ENCODE measurements at regions of chr10 and their contacts with region 1.

Region 1: DNA sequence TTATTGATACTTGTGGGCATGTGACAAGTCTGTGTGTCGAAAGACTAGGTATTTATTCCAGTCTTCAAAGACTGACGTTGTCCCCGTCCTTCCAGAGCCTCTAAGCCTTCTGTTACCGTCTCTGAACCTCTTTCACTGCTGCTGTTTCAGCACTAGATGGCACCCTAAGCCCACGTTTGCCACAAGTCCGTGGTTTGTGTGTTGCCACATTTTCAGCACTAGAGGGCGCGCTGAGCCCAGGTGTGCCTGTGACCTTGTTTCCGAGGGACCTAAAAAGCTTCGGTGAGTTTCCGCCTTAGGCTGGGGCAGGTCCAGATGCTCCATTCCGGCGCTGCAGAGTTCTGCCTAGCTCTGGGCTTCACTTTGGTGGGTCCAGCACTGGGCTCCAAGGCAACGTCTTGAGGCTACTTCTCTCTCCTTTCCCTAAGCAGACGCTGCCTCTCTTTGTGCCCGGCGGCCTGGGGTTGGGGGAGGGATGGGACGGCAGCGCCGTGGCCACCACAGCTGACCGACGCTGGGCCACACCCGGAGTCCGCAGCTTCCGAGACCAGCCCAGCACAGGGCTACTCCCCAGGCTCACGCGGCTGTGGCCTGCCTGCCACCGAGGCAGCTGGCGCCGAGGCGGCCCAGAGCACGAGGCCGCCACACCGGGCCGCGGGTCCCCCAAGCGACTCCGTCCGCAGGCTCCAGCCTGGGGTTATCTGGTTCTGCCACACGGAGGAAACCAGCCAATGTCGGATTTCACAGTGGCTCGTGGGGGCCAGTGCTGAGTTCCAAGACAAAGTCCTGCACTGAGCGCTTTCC is 520.2 kb downstream of the REEP3 start:
- DNase-seq: peak; percentile 76
- CTCF ChIP-seq: peak; percentile 100

Region 2: DNA sequence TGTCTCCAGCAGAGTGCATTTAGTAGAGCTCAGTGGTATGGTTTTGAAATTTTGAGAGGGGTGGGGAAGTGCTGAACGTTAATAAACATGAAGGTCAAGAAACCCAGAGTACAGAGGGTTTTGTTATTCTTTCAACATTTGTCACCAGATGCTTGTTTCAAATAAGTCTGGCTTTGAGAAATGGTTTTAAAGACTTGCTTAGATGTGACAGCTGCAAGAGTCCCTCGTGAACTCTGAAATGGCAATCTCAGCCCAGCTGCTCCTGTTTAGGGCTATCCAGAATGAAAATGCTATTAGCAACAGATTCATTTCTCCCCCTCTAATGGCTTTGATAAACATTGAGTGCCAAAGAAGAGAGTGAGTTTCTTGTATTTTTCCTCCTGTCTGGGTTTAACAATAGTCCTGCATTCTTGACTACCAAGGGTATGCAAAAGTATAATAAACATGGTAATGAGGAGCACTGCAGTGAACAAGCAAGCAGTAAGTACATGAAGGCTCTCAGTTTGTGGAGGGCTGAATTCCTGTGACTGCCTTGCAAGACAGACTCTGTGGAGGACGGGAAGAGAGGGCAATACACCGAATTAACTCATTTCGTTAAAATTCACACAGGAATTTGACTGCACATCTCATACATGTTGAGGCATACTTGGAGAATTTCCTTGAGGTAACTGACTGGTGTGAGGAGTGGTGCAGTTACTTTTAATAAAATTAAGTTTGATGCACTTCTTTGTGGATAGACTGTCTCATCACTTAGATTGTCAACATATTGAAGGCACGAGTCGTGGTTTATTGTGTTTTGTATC is 29.3 kb before region 1 on chr10:
- CTCF ChIA-PET with region 1: no interaction called
- POLR2A ChIA-PET with region 1: no interaction called
- DNase-seq: no peak
- CTCF ChIP-seq: no peak

Region 3: GRCh38 chr10:64054392-64054791 is 13.0 kb after region 1 on chr10:
- CTCF ChIA-PET with region 1: interaction called, 46 read pairs
- POLR2A ChIA-PET with region 1: no interaction called
- DNase-seq: no peak
- CTCF ChIP-seq: no peak

Region 4: GRCh38 chr10:64076322-64076940 is 35.0 kb after region 1 on chr10:
- CTCF ChIA-PET with region 1: no interaction called
- POLR2A ChIA-PET with region 1: no interaction called
- DNase-seq: no peak
- CTCF ChIP-seq: no peak